ENCODE measurements at regions of chr13 and their contacts with region 1.

Region 1: DNA sequence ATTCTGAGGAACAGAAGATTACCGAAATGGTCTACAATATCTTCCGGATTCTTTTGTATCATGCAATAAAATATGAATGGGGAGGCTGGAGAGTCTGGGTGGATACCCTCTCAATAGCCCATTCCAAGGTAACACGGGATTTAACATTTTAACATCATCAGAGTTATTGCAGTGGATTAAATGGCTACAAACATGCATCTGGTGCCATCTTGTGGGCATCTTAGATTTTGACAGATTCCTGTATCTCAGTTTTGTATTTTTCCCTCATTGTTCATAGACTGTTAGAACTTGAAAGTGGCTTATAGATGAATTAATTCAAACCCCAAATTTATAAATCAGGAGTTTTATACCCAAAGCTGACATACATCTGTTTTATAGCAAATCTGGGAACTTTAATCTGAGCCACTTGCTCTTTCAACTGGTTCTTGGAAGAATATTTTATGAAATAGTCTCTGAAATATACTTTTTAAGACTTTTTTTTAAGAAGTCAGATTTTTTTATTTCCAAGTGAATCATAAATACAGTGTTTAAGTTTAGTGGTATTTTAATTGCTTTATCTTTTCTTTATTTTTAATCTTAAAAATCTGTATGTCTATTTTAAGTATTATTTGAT is 215.2 kb downstream of the NBEA start:
- DNase-seq: peak; percentile 50
- ATAC-seq: peak; percentile 80
- H3K4me3 ChIP-seq: no peak overlapping the region
- H3K27ac ChIP-seq: no peak overlapping the region
- H3K4me1 ChIP-seq: no peaks in the 10 kb centered on the region
- H3K27me3 ChIP-seq: no peaks in the 10 kb centered on the region
- CTCF ChIP-seq: peak; percentile 64
- POLR2A ChIP-seq: no peak
- RAD21 ChIP-seq: peak; percentile 82

Region 2: GRCh38 chr13:33554919-33555791 is 1602.1 kb before region 1 on chr13:
- CTCF ChIA-PET with region 1: no interaction called
- POLR2A ChIA-PET with region 1: no interaction called
- dilution Hi-C with region 1: no loop called
- in situ Hi-C with region 1: loop called (anchors 25 kb)
- intact Hi-C with region 1: loop called (anchors 10 kb)
- DNase-seq: no peak
- ATAC-seq: peak; percentile 77
- H3K4me3 ChIP-seq: no peak overlapping the region
- H3K27ac ChIP-seq: peak overlapping the region; percentile 34; the same call in 1 of the 2 replicates
- H3K4me1 ChIP-seq: peaks cover 4% of the 10 kb centered on the region
- H3K27me3 ChIP-seq: no peaks in the 10 kb centered on the region
- CTCF ChIP-seq: no peak
- POLR2A ChIP-seq: no peak
- RAD21 ChIP-seq: no peak

Region 3: DNA sequence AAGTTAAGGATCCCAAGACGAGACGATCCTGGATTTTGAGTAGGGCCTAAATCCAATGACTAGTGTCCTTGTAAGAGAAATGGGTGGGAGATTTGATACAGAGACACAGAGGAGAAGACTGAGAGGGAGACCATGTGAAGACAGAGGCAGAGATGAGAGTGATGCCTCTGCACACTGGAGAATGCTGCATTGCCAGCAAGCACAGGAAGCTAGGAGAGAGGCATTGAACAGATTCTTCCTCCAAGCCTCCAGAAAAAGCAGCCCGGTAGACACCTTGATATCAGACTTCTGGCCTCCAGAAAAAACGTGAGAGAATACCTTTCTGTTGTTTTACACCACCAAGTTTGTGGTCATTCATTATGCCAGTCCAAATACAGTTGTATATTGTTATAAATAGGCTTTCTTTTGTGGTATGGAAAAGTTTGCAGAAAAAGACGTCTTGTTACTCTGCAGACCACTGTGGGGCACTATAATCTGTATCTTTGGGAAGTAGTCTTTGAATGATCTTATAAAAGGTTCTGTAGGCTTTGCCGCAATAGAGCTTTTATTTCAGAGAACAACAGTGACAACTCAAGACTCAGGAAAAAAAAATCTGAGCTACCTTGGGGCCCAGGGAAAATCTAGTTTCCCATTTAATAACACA is 1357.2 kb before region 1 on chr13:
- CTCF ChIA-PET with region 1: no interaction called
- POLR2A ChIA-PET with region 1: no interaction called
- dilution Hi-C with region 1: no loop called
- in situ Hi-C with region 1: loop called (anchors 10 kb)
- intact Hi-C with region 1: loop called (anchors 1 kb)
- DNase-seq: peak; percentile 46
- ATAC-seq: peak; percentile 92
- H3K4me3 ChIP-seq: no peak overlapping the region
- H3K27ac ChIP-seq: no peak overlapping the region
- H3K4me1 ChIP-seq: no peaks in the 10 kb centered on the region
- H3K27me3 ChIP-seq: peaks cover 6% of the 10 kb centered on the region
- CTCF ChIP-seq: peak; percentile 50
- POLR2A ChIP-seq: no peak
- RAD21 ChIP-seq: peak; percentile 50

Region 4: GRCh38 chr13:33931397-33932311 is 1225.6 kb before region 1 on chr13:
- CTCF ChIA-PET with region 1: no interaction called
- POLR2A ChIA-PET with region 1: no interaction called
- dilution Hi-C with region 1: no loop called
- in situ Hi-C with region 1: loop called (anchors 5 kb)
- intact Hi-C with region 1: loop called (anchors 1 kb)
- DNase-seq: peak; percentile 53
- ATAC-seq: peak; percentile 90
- H3K4me3 ChIP-seq: no peak overlapping the region
- H3K27ac ChIP-seq: no peak overlapping the region
- H3K4me1 ChIP-seq: no peaks in the 10 kb centered on the region
- H3K27me3 ChIP-seq: no peaks in the 10 kb centered on the region
- CTCF ChIP-seq: peak; percentile 59
- POLR2A ChIP-seq: no peak
- RAD21 ChIP-seq: peak; percentile 80

Region 5: DNA sequence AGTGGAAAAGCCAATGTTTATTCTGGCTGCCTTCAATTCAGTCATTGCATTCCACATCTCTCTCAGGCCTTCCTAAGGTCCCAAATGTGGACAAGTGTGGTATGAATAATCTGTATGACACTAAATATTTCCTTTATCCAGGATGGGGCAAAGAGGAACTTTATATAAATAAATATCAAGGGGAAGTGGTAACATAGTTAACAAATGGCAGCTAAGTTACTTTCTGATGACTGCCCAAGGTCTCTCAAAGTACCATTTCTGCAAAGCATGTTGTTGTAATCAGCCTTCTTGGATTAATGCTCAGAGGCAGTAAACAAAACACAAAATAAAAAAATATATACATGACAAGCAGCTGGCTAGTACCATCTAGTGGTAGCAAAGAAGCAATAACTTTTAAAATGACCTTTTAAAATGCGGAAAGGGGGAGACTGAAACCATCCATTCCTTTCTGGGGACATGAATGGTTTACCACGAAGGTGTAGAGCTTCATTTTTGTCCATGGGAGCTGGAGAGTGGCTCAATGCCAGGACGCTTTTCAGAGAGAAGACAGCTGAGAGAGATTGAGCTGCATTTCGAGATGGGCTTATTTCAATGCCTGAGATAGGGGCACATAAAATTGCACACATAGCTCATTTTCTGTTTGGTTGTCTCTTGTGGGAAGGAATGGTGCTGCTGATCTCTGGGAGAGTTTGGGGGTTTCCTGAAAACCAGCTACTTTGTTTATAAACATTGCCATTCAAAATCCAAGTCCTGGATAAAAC is 1080.1 kb before region 1 on chr13:
- CTCF ChIA-PET with region 1: no interaction called
- POLR2A ChIA-PET with region 1: no interaction called
- dilution Hi-C with region 1: no loop called
- in situ Hi-C with region 1: no loop called
- intact Hi-C with region 1: loop called (anchors 1 kb)
- DNase-seq: peak; percentile 1
- ATAC-seq: peak; percentile 75
- H3K4me3 ChIP-seq: no peak overlapping the region
- H3K27ac ChIP-seq: no peak overlapping the region
- H3K4me1 ChIP-seq: peaks cover 2% of the 10 kb centered on the region; the same call in 1 of the 2 replicates
- H3K27me3 ChIP-seq: no peaks in the 10 kb centered on the region
- CTCF ChIP-seq: peak; percentile 51
- POLR2A ChIP-seq: no peak
- RAD21 ChIP-seq: peak; percentile 51

Region 6: DNA sequence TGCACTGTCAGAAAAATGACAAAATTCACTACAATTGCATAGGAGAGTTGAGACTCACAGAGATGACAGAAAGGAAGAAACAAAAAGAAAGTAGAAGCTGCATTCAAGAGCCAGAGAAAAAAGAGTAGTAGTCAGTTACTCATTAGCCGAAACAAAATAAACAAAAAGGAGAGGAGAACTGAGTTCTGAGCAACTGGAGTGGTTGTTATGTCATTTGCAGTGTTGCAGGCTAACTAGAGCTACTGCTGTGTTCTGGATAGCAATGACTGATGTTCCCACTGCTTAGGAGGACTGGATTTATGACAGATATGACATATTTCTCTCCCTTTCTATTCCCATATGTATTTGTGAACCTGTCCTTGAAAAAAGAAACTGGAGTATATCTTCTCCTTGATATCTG is 856.7 kb before region 1 on chr13:
- CTCF ChIA-PET with region 1: no interaction called
- POLR2A ChIA-PET with region 1: interaction called, 14 read pairs
- dilution Hi-C with region 1: no loop called
- in situ Hi-C with region 1: no loop called
- intact Hi-C with region 1: no loop called
- DNase-seq: no peak
- ATAC-seq: no peak; the same call in none of the 2 replicates
- H3K4me3 ChIP-seq: no peak overlapping the region
- H3K27ac ChIP-seq: no peak overlapping the region
- H3K4me1 ChIP-seq: no peaks in the 10 kb centered on the region
- H3K27me3 ChIP-seq: no peaks in the 10 kb centered on the region
- CTCF ChIP-seq: no peak
- POLR2A ChIP-seq: no peak
- RAD21 ChIP-seq: no peak